ENCODE measurements at regions of chr1 and their contacts with region 1.

Region 1: GRCh38 chr1:197180252-197180878 is 33.9 kb upstream of the ASPM start:
- DNase-seq: peak in 1 of 2 experiments; percentile 20
- H3K4me3 ChIP-seq: no peak overlapping the region
- H3K4me3 Mint-ChIP-seq: no peak overlapping the region
- H3K27ac Mint-ChIP-seq: no peak overlapping the region
- H3K4me1 ChIP-seq: no peaks in the 10 kb centered on the region
- H3K4me1 Mint-ChIP-seq: peaks cover 5% of the 10 kb centered on the region
- H3K27me3 ChIP-seq: no peaks in the 10 kb centered on the region
- H3K27me3 Mint-ChIP-seq: no peaks in the 10 kb centered on the region
- CTCF ChIP-seq: peak; percentile 67 to 73

Region 2: DNA sequence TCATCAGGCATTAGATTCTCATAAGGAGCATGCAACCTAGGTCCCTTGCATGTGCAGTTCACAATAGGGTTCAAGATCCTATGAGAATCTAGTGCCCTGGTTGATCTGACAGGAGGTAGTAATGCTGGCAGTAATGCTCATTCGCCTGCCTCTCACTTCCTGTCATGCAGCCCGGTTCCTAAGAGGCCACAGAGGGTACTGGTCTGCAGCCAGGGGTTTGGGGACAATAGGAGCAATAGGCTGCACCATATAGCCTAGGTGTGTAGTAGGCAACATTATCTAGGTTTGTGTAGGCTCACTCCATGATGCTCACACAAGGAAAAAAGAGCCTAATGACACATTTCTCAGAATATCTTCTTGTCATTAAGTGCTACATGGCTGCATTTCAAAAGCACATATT is 177.2 kb before region 1 on chr1:
- CTCF ChIA-PET with region 1: no interaction called
- POLR2A ChIA-PET with region 1: no interaction called
- intact Hi-C with region 1: no loop called
- DNase-seq: no peak
- H3K4me3 ChIP-seq: no peak overlapping the region
- H3K4me3 Mint-ChIP-seq: no peak overlapping the region
- H3K27ac Mint-ChIP-seq: no peak overlapping the region
- H3K4me1 ChIP-seq: no peaks in the 10 kb centered on the region
- H3K4me1 Mint-ChIP-seq: no peaks in the 10 kb centered on the region
- H3K27me3 ChIP-seq: no peaks in the 10 kb centered on the region
- H3K27me3 Mint-ChIP-seq: peaks cover 4% of the 10 kb centered on the region
- CTCF ChIP-seq: no peak

Region 3: DNA sequence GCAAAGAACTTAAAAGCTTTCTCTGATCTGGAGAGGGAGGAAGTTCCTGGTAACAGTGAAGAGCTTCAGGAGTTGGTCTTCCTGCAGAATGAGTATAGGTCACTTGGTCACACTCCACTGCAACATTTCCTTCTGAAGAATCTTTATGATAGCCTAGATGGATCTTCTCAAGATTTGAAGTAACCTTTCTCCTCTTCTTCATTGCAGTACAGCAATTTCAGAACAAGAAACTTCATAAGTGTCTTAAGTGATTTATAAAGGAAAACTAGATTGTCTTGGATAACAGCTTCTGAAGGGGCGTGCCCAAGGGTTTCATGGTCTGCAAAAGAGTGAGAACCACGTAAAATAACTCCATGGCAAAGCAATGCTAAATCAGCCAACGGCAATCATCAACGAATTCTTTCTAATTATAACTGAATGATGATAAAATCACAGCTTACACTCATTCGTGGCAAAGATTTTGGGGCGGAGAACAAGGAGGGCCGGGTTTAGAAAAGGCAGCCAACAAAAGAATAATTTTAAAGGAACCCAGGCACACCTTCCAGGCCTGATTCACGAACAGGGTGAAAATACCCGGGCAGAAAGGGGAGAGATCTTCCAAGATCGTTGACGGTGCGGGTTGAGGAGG is 20.0 kb after region 1 on chr1:
- CTCF ChIA-PET with region 1: no interaction called
- POLR2A ChIA-PET with region 1: no interaction called
- intact Hi-C with region 1: no loop called
- DNase-seq: peak in 1 of 2 experiments; percentile 8
- H3K4me3 ChIP-seq: peak overlapping the region; percentile 77
- H3K4me3 Mint-ChIP-seq: peak overlapping the region; percentile 88
- H3K27ac Mint-ChIP-seq: peak overlapping the region; percentile 92
- H3K4me1 ChIP-seq: no peaks in the 10 kb centered on the region; the same call in 1 of the 2 replicates
- H3K4me1 Mint-ChIP-seq: peaks cover 7% of the 10 kb centered on the region
- H3K27me3 ChIP-seq: no peaks in the 10 kb centered on the region
- H3K27me3 Mint-ChIP-seq: no peaks in the 10 kb centered on the region
- CTCF ChIP-seq: no peak

Region 4: GRCh38 chr1:197224160-197224559 is 43.8 kb after region 1 on chr1:
- CTCF ChIA-PET with region 1: interaction called, 3 read pairs
- POLR2A ChIA-PET with region 1: no interaction called
- intact Hi-C with region 1: loop called (anchors 1 kb)
- DNase-seq: no peak
- H3K4me3 ChIP-seq: no peak overlapping the region
- H3K4me3 Mint-ChIP-seq: no peak overlapping the region
- H3K27ac Mint-ChIP-seq: no peak overlapping the region
- H3K4me1 ChIP-seq: no peaks in the 10 kb centered on the region
- H3K4me1 Mint-ChIP-seq: peaks cover 6% of the 10 kb centered on the region
- H3K27me3 ChIP-seq: no peaks in the 10 kb centered on the region
- H3K27me3 Mint-ChIP-seq: no peaks in the 10 kb centered on the region
- CTCF ChIP-seq: no peak

Region 5: DNA sequence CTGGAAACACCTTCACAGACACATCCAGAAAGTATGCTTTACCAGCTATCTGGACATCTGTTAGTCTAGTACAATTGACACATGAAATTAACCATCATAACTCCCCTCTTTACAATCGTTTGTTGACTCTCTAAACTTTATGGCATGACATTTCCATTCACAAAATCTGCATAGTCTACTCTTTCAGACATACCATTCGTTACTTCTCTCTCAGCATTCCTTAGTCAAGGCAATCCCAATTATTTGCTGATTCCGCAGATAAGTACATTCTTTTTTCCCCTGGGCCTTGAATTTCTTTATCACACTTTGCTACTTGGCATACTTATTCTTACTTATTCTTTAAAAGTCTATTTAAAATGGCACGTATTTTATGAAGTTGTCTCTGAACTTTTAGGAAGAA is 72.6 kb after region 1 on chr1:
- CTCF ChIA-PET with region 1: no interaction called
- POLR2A ChIA-PET with region 1: no interaction called
- intact Hi-C with region 1: loop called (anchors 5 kb)
- DNase-seq: peak in 1 of 2 experiments; percentile 22
- H3K4me3 ChIP-seq: no peak overlapping the region
- H3K4me3 Mint-ChIP-seq: no peak overlapping the region
- H3K27ac Mint-ChIP-seq: no peak overlapping the region
- H3K4me1 ChIP-seq: no peaks in the 10 kb centered on the region
- H3K4me1 Mint-ChIP-seq: peaks cover 15% of the 10 kb centered on the region
- H3K27me3 ChIP-seq: no peaks in the 10 kb centered on the region
- H3K27me3 Mint-ChIP-seq: peaks cover 3% of the 10 kb centered on the region
- CTCF ChIP-seq: no peak

Region 6: DNA sequence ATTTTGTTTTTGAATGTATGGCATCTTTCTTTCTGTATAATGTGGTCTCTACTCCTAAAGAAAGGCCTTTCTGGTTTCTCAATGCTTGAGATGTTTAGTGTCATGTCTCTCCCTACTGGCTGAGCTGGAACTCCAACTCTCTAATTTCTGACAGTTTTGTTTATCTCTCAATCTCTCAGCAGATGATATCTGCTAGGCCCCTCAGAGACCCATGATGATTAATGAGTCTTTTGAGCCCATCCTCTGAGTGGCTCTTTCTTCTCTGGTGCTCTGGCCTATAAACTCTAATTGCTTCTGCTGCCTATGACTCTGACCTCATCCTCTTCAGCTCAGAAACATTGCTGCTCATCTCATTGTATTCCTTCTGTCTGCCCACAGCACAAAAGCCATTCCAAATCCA is 134.3 kb after region 1 on chr1:
- CTCF ChIA-PET with region 1: interaction called, 4 read pairs
- POLR2A ChIA-PET with region 1: no interaction called
- intact Hi-C with region 1: loop called (anchors 1 kb)
- DNase-seq: no peak
- H3K4me3 ChIP-seq: no peak overlapping the region
- H3K4me3 Mint-ChIP-seq: no peak overlapping the region
- H3K27ac Mint-ChIP-seq: no peak overlapping the region
- H3K4me1 ChIP-seq: peaks cover 21% of the 10 kb centered on the region
- H3K4me1 Mint-ChIP-seq: peaks cover 21% of the 10 kb centered on the region
- H3K27me3 ChIP-seq: no peaks in the 10 kb centered on the region
- H3K27me3 Mint-ChIP-seq: no peaks in the 10 kb centered on the region
- CTCF ChIP-seq: no peak

Region 7: GRCh38 chr1:197327776-197328364 is 147.5 kb after region 1 on chr1:
- CTCF ChIA-PET with region 1: interaction called, 3 read pairs
- POLR2A ChIA-PET with region 1: no interaction called
- intact Hi-C with region 1: loop called (anchors 1 kb)
- DNase-seq: no peak
- H3K4me3 ChIP-seq: no peak overlapping the region
- H3K4me3 Mint-ChIP-seq: no peak overlapping the region
- H3K27ac Mint-ChIP-seq: no peak overlapping the region
- H3K4me1 ChIP-seq: no peaks in the 10 kb centered on the region
- H3K4me1 Mint-ChIP-seq: no peaks in the 10 kb centered on the region
- H3K27me3 ChIP-seq: no peaks in the 10 kb centered on the region
- H3K27me3 Mint-ChIP-seq: peaks cover 3% of the 10 kb centered on the region
- CTCF ChIP-seq: peak; percentile 41 to 43

Region 8: DNA sequence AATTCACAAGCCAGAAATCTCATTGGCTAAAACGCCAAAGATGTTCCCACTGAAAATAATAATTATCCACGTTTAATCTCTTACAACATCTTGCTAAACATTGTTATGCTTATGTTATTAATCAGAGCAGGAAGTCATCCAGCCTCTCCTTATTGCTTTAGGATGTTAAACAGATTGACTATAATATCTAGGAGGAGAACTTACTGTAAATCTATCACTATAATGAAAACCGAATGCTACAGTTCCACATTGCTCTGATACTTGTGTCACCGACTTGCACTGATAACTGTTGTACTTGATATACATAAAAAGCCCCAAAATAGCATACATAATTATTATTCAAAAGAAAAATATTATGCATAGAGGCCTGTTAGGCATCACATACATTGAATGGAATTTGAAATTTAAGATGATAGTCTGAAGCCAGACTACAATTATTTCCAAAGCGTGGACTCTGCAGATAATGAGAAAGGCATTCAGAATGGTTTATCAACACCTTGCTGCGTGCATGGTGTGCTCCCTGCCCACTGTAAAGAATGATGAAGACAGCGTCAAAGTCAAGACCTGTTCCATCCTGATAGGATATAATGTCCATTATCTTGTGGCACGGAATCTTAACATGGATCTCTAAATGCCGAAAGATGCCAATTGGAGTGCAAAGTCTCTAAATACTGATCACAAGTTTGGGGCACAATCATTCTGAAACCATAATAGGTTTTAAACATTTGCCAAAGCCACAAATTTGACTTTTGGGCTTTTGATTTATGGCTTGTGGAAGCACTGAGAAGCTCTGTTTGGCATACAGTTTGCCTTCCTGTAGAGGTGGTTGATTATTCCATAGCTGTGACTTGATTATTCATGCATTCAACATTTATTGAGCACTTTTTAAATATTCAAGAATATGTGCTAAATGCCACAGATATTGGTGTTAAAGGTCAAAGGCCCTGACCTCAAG is 159.0 kb after region 1 on chr1:
- CTCF ChIA-PET with region 1: no interaction called
- POLR2A ChIA-PET with region 1: no interaction called
- intact Hi-C with region 1: loop called (anchors 1 kb)
- DNase-seq: no peak
- H3K4me3 ChIP-seq: no peak overlapping the region
- H3K4me3 Mint-ChIP-seq: no peak overlapping the region
- H3K27ac Mint-ChIP-seq: no peak overlapping the region
- H3K4me1 ChIP-seq: no peaks in the 10 kb centered on the region
- H3K4me1 Mint-ChIP-seq: peaks cover 10% of the 10 kb centered on the region
- H3K27me3 ChIP-seq: no peaks in the 10 kb centered on the region
- H3K27me3 Mint-ChIP-seq: peaks cover 6% of the 10 kb centered on the region
- CTCF ChIP-seq: no peak

Region 9: DNA sequence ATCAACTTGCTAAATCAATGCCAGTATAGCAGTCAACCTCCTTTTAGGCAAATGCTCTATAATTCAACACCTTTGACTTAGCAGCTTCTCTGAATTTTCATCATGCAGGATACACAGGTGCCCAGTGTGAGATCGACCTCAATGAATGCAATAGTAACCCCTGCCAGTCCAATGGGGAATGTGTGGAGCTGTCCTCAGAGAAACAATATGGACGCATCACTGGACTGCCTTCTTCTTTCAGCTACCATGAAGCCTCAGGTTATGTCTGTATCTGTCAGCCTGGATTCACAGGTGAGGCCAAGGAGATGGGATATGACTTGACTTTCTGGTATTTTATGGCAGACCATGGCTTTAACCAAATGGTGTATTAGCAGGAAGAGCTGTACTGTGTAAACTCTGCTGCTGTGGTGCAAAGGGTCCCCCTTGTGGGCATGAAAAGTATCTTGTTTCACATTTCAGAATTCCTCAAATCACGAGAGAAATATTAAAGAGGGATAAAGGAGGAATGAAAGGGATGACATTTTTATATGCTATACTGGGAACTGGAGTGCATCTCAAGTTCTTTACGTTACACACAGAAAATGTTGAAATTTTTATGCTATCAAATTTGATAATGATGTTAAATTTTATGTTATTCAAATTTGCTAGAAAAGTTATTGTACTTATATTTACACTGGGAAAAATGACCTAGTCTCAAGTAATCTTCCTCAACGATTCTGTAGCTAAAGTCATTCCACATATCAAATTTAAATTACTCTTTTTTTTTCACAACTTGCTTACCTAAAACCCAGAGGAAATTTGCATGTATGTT is 176.6 kb after region 1 on chr1:
- CTCF ChIA-PET with region 1: interaction called, 15 read pairs
- POLR2A ChIA-PET with region 1: no interaction called
- intact Hi-C with region 1: loop called (anchors 1 kb)
- DNase-seq: peak in 1 of 2 experiments; percentile 53
- H3K4me3 ChIP-seq: no peak overlapping the region
- H3K4me3 Mint-ChIP-seq: no peak overlapping the region
- H3K27ac Mint-ChIP-seq: no peak overlapping the region
- H3K4me1 ChIP-seq: no peaks in the 10 kb centered on the region
- H3K4me1 Mint-ChIP-seq: no peaks in the 10 kb centered on the region
- H3K27me3 ChIP-seq: no peaks in the 10 kb centered on the region
- H3K27me3 Mint-ChIP-seq: no peaks in the 10 kb centered on the region
- CTCF ChIP-seq: peak; percentile 59 to 71

Measured in Caco-2 (cell line).